Colonic mucosa (tissue), 4 donors: ENCODE measurements at regions of chr3 and their contacts with region 1.

Region 1: DNA sequence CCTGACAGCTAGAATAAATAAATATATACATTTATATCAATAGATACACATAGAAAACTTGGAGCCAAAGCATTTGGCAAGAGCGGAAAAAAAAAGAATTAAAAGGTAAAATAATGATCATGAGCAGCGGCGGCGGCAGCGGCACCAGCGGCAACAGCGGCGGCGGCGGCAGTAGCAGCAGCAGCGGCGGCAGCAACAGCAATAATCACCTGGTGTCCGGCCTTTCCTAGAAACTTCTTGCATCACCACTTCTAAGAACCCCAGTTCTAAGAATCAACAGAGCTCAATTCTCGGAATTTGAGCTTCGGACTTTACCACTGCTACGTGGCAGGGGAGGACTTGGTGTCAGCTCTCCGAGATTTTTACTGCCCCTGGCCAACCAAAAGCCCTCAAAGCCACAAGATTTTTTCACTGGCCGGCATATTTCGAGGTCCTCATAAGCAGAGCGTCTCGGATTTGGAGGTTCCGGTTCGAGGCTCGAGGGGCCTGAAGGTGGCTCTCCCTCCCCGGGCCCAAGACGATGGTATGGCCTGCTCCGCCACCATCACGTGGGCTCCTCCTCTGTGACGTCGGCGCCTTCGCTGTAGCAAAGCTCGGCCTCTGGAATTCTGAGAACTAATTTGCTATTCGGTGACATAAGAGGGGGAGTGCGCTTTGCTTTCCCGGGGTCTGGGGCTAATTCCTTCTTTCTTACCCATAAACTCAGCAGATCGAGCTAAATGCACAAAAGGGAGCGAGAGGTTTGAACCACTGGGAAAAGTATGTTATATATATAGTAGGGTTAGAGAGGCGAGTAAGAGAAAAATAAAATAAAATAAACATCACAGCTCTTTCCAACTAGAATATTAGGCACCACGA is at the start of gene BCL6:
- DNase-seq: peak; percentile 91
- H3K4me3 ChIP-seq: peak within 1 kb of the TSS; percentile 61
- H3K27ac ChIP-seq: peak within 1 kb of the TSS; percentile 97
- H3K4me1 ChIP-seq: peaks cover 2% of the 10 kb centered on the region
- H3K27me3 ChIP-seq: no peaks in the 10 kb centered on the region
- CTCF ChIP-seq: no peak
- total RNA-seq, gene BCL6: 8.8 to 30.2 TPM

Region 2: GRCh38 chr3:188154014-188154808 is 408.8 kb after region 1 on chr3 and contains the start of gene LPP:
- intact Hi-C with region 1: loop called (anchors 5 kb)
- DNase-seq: peak; percentile 80
- H3K4me3 ChIP-seq: peak within 1 kb of the TSS; percentile 75
- H3K27ac ChIP-seq: peak within 1 kb of the TSS; percentile 94
- H3K4me1 ChIP-seq: peaks cover 10% of the 10 kb centered on the region
- H3K27me3 ChIP-seq: no peaks in the 10 kb centered on the region
- CTCF ChIP-seq: no peak
- total RNA-seq, gene LPP: 170 to 246 TPM

Region 3: GRCh38 chr3:188270423-188270972 is 525.1 kb after region 1 on chr3:
- intact Hi-C with region 1: loop called (anchors 10 kb)
- DNase-seq: no peak
- H3K4me3 ChIP-seq: no peak overlapping the region
- H3K27ac ChIP-seq: peak overlapping the region; percentile 44
- H3K4me1 ChIP-seq: peaks cover 6% of the 10 kb centered on the region
- H3K27me3 ChIP-seq: no peaks in the 10 kb centered on the region
- CTCF ChIP-seq: no peak

Region 4: DNA sequence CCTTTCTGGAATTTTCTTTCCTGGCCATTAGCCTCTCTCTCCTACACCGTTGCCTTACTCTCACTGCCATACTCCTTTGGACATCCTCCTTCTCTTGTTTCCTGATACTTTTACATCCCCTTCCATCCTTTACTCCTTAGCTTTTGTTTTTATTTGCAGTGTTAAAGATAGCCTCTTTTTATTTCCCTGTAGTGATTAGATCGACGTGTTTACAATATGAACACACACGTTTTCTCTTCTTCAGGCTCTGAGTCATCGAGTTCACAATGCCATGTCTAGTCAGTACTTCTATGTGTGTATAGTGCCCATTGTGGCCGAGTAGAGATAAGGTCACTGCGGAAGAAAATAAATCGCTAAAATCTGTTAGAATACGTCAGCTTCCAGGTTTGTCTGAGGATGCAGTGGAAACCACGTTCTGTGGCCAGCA is 617.0 kb after region 1 on chr3:
- intact Hi-C with region 1: loop called (anchors 10 kb)
- DNase-seq: no peak
- H3K4me3 ChIP-seq: no peak overlapping the region
- H3K27ac ChIP-seq: no peak overlapping the region
- H3K4me1 ChIP-seq: peaks cover 6% of the 10 kb centered on the region
- H3K27me3 ChIP-seq: no peaks in the 10 kb centered on the region
- CTCF ChIP-seq: no peak

Region 5: DNA sequence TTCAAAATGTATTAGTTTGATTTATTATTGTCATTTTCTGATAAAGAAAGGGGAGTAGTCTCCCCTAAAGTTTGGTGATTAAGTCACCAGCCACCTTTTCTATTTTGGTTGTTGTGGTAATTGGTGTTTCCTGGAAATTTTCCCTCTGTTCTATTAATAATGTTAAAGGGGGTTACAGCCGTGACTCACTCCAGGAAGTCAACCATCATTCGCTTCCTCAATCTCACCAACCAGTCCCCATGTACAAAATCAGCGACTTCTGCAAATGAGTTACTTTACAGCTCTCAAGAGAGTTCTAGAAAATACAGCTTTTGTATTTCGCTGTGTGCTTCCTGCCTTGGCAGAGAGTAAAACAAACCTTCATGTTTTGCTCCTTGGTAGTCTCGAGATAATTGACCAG is 693.6 kb after region 1 on chr3:
- intact Hi-C with region 1: loop called (anchors 10 kb)
- DNase-seq: no peak
- H3K4me3 ChIP-seq: no peak overlapping the region
- H3K27ac ChIP-seq: peak overlapping the region; percentile 37
- H3K4me1 ChIP-seq: no peaks in the 10 kb centered on the region
- H3K27me3 ChIP-seq: no peaks in the 10 kb centered on the region
- CTCF ChIP-seq: no peak